ENCODE measurements at regions of chr11 and their contacts with region 1.

Region 1: GRCh38 chr11:93543292-93543977 is at the start of gene SMCO4:
- DNase-seq: peak; percentile 90
- H3K4me3 ChIP-seq: peak within 1 kb of the TSS; percentile 68
- H3K27ac ChIP-seq: peak within 1 kb of the TSS; percentile 73
- H3K4me1 ChIP-seq: no peaks in the 10 kb centered on the region
- H3K27me3 ChIP-seq: no peaks in the 10 kb centered on the region
- CTCF ChIP-seq: peak; percentile 52
- total RNA-seq, gene SMCO4: 47.2 to 73.7 TPM

Region 2: GRCh38 chr11:93234602-93235207 is 308.7 kb before region 1 on chr11:
- intact Hi-C with region 1: loop called (anchors 5 kb)
- DNase-seq: peak; percentile 82
- H3K4me3 ChIP-seq: no peak overlapping the region
- H3K27ac ChIP-seq: no peak overlapping the region
- H3K4me1 ChIP-seq: no peaks in the 10 kb centered on the region
- H3K27me3 ChIP-seq: no peaks in the 10 kb centered on the region
- CTCF ChIP-seq: peak; percentile 82

Region 3: DNA sequence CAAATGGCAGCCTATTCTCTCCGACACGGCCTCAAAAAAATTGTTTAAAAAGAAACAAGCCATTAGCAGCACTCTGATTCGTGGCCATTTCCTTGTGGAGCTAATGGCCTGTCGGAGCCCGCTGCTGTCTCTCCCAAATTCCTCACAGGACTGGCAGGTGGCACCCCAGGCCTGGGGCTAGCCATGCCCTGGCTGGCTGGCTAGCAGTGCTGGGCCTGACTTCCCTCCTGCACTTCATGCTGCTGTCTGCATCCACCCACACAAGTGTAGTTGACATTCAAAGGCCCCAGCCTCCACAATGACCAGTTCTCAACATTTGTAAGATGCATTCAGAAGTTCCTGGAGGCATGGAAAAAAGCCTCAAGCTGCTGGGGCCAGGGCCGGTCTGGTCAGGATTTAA is 61.7 kb before region 1 on chr11:
- intact Hi-C with region 1: loop called (anchors 5 kb)
- DNase-seq: no peak
- H3K4me3 ChIP-seq: no peak overlapping the region
- H3K27ac ChIP-seq: peak overlapping the region; percentile 49
- H3K4me1 ChIP-seq: peaks cover 5% of the 10 kb centered on the region
- H3K27me3 ChIP-seq: no peaks in the 10 kb centered on the region
- CTCF ChIP-seq: no peak

Region 4: DNA sequence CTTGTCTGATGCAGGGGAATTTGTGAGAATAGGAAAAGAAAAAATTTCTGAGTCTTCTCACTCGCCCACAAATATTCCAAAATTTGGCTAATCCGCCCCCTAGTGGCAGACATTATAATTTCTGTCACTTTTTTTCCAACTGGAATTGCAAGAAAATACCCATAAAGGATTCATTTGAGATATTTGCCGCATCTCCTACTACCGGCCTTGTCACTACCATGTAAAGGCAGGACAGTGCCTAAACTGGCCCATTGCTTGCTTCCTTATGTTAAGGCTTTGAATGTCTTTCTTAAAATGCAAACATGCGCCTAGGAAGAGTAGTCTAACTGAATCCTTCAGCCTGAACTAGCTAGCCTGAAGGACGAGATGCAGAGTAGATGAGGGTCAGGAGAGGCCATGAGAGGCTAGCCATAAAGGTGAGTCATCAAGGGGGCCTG is 108.7 kb after region 1 on chr11:
- intact Hi-C with region 1: loop called (anchors 5 kb)
- DNase-seq: peak; percentile 51
- H3K4me3 ChIP-seq: no peak overlapping the region
- H3K27ac ChIP-seq: no peak overlapping the region
- H3K4me1 ChIP-seq: no peaks in the 10 kb centered on the region
- H3K27me3 ChIP-seq: no peaks in the 10 kb centered on the region
- CTCF ChIP-seq: peak; percentile 69